ENCODE measurements at regions of chr10 and their contacts with region 1.

Region 1: GRCh38 chr10:21919906-21920305 is 83.6 kb downstream of the DNAJC1 start:
- DNase-seq: no peak
- H3K4me3 ChIP-seq: no peak overlapping the region
- CTCF ChIP-seq: no peak

Region 2: GRCh38 chr10:21870825-21871424 is 49.0 kb before region 1 on chr10:
- in situ Hi-C with region 1: loop called (anchors 5 kb)
- DNase-seq: no peak
- H3K4me3 ChIP-seq: no peak overlapping the region
- CTCF ChIP-seq: no peak

Region 3: DNA sequence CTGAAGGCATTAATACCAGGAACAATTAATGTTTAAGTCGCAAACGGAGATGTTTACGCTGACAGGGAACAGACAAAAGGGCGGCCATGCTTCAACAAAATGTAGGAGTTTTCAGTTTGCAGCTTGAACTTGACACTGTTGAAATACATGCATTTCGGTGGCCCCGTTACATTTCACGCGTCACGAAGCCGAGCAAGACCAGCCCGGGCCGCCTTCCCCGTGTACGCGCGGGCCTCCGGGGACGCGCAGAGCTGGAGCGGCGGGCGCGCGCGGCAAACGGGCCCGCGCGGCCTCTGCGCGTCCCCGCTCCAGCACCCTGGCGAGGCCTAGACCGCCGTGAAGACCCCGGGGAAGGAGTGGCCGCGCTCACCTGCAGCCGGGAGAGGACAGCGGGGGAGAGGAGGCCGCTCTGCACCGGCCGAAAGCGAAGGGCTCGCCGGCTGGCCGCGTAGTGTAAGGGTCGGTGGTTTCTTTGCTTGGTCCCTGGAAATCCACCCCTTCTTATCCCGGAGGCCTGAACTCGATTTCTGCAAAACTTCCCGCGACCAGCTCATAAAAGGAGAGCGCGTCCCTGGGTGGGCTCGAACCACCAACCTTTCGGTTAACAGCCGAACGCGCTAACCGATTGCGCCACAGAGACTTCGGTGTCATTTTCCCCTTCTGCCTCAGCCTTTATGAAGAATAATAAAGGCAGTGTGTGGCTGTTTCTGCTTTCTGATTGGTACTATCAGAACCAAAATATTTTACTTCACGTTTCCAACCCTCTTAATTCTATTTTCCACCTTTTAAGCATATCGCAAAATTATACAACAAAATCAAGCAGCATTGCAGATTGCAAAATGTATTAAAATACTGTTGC is 309.3 kb after region 1 on chr10:
- in situ Hi-C with region 1: no loop called
- DNase-seq: peak; percentile 73
- H3K4me3 ChIP-seq: peak overlapping the region; percentile 63
- CTCF ChIP-seq: no peak